ENCODE measurements at regions of chr22 and their contacts with region 1.

Region 1: DNA sequence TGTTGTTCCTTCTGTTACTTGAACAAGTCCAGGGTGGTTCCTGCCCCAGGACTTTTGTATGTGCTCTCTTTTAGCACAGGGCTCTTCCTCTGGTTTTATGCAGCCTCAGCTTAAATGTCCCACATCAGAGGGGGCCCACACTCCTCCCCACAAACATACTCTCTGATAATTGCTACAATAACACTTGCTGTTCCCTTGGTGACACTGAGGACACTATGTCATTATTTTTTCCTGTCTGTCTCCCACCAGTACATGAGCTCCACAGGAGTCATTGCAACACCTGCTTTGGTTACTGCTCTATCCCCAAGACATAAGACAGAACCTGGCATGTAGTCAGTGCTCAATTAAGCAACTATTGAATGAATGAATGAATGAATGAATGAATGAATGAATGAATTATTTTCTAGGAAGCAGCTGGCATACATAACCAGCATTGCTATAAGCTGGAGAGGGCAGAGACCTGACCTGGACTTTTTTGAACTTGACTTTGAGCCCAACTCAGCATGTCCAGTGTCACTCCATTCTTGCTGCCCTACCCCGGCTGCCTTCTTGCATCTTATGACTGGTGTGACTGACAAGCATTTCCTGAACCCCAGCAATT is 7.5 kb upstream of the WNT7B start:
- DNase-seq: no peak
- CTCF ChIP-seq: no peak

Region 2: GRCh38 chr22:45462034-45462690 is 522.3 kb before region 1 on chr22:
- in situ Hi-C with region 1: no loop called
- DNase-seq: no peak
- CTCF ChIP-seq: peak; percentile 30

Region 3: DNA sequence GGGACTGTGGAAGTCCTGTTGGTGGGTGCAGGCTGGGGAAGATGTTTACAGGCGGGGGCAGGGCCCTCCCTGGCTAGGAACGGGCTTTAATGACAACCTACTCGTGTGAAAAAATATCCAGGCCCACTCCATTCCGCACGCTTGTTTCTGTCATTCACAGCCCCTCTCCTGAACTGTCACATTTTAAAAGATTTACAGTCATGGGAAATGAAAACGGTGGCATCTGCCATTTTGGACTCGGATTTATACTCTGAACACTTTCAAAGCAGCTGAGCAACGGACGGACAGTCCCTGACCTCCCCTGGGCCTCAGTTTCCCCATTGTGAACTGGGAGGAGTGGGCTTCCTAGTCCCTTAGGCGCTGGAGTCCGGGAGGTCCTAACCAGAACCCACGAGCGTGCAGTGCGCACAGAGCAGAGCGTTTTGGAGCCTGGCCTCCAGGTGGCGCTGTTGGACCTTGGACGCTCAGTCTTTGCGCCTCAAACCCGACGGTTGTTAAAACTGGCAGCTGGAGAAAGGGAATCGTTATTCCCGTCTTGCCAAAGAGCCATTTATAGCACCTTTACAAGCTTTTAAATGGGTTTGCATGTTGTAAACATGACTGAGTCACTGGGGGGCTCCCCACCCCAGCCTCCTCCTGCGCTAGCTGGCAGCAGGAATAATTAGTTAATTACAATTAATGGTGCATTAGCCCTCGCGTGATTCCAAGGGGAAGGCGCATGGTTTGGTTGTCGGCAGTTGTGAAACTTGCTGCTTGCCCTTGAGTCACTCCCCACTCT is 406.5 kb before region 1 on chr22:
- in situ Hi-C with region 1: loop called (anchors 5 kb)
- DNase-seq: peak; percentile 85
- CTCF ChIP-seq: peak; percentile 97

Region 4: GRCh38 chr22:45645526-45646414 is 338.6 kb before region 1 on chr22:
- in situ Hi-C with region 1: loop called (anchors 10 kb)
- DNase-seq: peak; percentile 89
- CTCF ChIP-seq: peak; percentile 99

Region 5: DNA sequence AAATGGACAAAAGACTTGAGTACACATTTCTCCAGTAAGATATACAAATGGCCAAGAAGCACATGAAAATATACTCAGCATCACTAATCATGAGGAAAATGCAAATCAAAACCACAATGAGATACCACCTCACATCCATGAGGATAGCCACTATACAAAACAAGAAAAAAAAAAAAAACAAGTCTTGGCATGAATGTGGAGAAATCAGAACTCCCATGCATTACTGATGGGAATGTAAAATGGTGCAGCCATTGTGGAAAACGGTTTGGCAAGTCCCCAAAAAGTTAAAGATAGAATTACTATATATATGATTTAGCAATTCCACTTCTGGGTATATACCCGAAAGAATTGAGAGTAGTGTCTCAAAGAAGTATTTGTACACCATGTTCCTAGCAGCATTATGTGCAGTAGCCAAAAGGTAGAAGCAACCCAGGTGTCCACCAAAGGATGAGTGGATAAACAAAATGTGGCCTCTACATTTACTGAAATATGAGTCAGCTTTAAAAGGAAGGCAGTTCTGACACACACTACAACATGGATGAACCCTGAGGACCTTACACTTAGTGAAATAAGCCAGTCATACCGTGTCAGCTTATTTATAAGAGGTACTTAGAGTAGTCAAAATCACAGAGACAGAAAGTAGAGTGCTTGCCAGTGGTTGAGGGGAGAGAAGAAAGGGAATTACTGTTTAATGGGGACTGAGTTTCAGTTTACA is 153.7 kb before region 1 on chr22:
- in situ Hi-C with region 1: no loop called
- DNase-seq: no peak
- CTCF ChIP-seq: no peak

Region 6: GRCh38 chr22:46147501-46148267 is 163.3 kb after region 1 on chr22:
- in situ Hi-C with region 1: no loop called
- DNase-seq: no peak
- CTCF ChIP-seq: no peak